A549 (cell line): ENCODE measurements at regions of chr4 and their contacts with region 1.

Region 1: GRCh38 chr4:84529169-84529751 is 30.2 kb upstream of the NKX6-1 start:
- DNase-seq: peak; percentile 12 to 13
- ATAC-seq: peak in 1 of 2 experiments; percentile 61; a peak in 2 of 6 replicates
- H3K4me3 ChIP-seq: no peak overlapping the region
- H3K27ac ChIP-seq: no peak overlapping the region
- H3K4me1 ChIP-seq: peaks cover 8% of the 10 kb centered on the region; the same call in 2 of the 3 replicates
- CTCF ChIP-seq: peak; percentile 64
- EP300 ChIP-seq: no peak
- POLR2A ChIP-seq: no peak
- RAD21 ChIP-seq: peak; percentile 49 to 53

Region 2: GRCh38 chr4:84389406-84389805 is 139.9 kb before region 1 on chr4:
- CTCF ChIA-PET with region 1: no interaction called
- POLR2A ChIA-PET with region 1: no interaction called
- DNase-seq: no peak
- ATAC-seq: no peak
- H3K4me3 ChIP-seq: no peak overlapping the region
- H3K27ac ChIP-seq: no peak overlapping the region
- H3K4me1 ChIP-seq: no peaks in the 10 kb centered on the region
- CTCF ChIP-seq: no peak
- EP300 ChIP-seq: no peak
- POLR2A ChIP-seq: no peak
- RAD21 ChIP-seq: no peak

Region 3: DNA sequence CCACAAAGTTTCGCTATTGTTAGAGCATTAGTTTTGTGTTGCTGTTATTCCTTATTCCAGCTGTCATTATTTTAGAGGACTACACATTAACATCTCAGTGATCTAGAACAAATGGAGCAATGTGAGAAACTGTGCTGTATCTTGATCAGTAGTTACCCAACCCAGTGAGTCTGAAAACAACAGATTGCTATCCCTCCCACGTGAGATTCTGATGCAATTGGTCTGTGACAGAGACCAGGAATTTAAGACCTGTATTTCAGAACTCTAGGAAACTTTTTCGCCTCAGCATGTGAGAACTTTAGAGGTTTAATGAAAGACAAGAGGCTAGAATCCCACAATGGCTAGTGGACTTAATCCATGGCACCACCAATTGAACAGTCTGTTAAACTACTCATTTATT is 18.0 kb after region 1 on chr4:
- CTCF ChIA-PET with region 1: interaction called, 10 read pairs
- POLR2A ChIA-PET with region 1: no interaction called
- DNase-seq: no peak
- ATAC-seq: no peak
- H3K4me3 ChIP-seq: no peak overlapping the region
- H3K27ac ChIP-seq: no peak overlapping the region
- H3K4me1 ChIP-seq: no peaks in the 10 kb centered on the region
- CTCF ChIP-seq: no peak
- EP300 ChIP-seq: no peak
- POLR2A ChIP-seq: no peak
- RAD21 ChIP-seq: no peak